Naive thymus-derived CD4-positive, alpha-beta T cell (primary cell): ENCODE measurements at regions of chr3 and their contacts with region 1.

Region 1: GRCh38 chr3:16319307-16319706 is 54.3 kb downstream of the OXNAD1 start:
- DNase-seq: peak in 8 of 9 donors; percentile 66 to 81 (median 78)
- ATAC-seq: peak; percentile 93
- H3K4me3 ChIP-seq: no peak overlapping the region
- H3K4me3 Mint-ChIP-seq: peak overlapping the region; percentile 35 to 78 (median 60)
- H3K27ac ChIP-seq: peak overlapping the region; percentile 60
- H3K27ac Mint-ChIP-seq: peak overlapping the region; percentile 79 to 98 (median 91)
- H3K4me1 ChIP-seq: peaks cover 40 to 58% of the 10 kb centered on the region in 2 donors
- H3K4me1 Mint-ChIP-seq: peaks cover 44 to 89% (median 81%) of the 10 kb centered on the region in 7 donors
- H3K27me3 ChIP-seq: no peaks in the 10 kb centered on the region
- H3K27me3 Mint-ChIP-seq: no peaks in the 10 kb centered on the region

Region 2: DNA sequence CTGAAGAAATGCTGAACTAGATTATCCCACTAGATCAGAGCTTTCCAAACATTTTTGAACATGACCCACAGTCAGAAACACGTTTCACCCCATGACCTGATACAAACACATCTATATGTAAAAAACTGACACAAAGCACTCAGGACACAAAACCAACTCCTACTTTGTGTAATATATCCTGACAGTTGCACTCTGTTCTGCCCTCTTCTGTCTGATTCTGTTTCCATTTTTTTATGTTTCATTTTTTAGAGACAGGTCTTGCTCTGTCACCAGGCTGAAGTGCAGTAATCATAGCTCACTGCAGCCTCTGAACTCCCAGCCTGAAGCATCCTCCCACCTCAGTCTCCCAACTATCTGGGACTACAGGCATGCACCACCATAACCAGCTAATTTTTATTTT is 210.0 kb after region 1 on chr3:
- CTCF ChIA-PET with region 1: interaction called, 10 read pairs
- POLR2A ChIA-PET with region 1: no interaction called
- intact Hi-C with region 1: no loop called
- DNase-seq: peak in 5 of 9 donors; percentile 32 to 54 (median 39)
- ATAC-seq: peak; percentile 62
- H3K4me3 ChIP-seq: no peak overlapping the region
- H3K4me3 Mint-ChIP-seq: no peak overlapping the region
- H3K27ac ChIP-seq: no peak overlapping the region
- H3K27ac Mint-ChIP-seq: peak overlapping the region in 6 of 9 donors; percentile 26 to 72 (median 58)
- H3K4me1 ChIP-seq: no peaks in the 10 kb centered on the region
- H3K4me1 Mint-ChIP-seq: peaks cover 4 to 19% (median 12%) of the 10 kb centered on the region in 7 donors
- H3K27me3 ChIP-seq: no peaks in the 10 kb centered on the region
- H3K27me3 Mint-ChIP-seq: peaks cover 0 to 19% (median 0%) of the 10 kb centered on the region in 5 donors

Region 3: GRCh38 chr3:16543242-16543864 is 224.0 kb after region 1 on chr3:
- CTCF ChIA-PET with region 1: no interaction called
- POLR2A ChIA-PET with region 1: no interaction called
- intact Hi-C with region 1: no loop called
- DNase-seq: no peak
- ATAC-seq: no peak
- H3K4me3 ChIP-seq: no peak overlapping the region
- H3K4me3 Mint-ChIP-seq: no peak overlapping the region
- H3K27ac ChIP-seq: no peak overlapping the region
- H3K27ac Mint-ChIP-seq: no peak overlapping the region
- H3K4me1 ChIP-seq: no peaks in the 10 kb centered on the region
- H3K4me1 Mint-ChIP-seq: peaks cover 0 to 27% (median 0%) of the 10 kb centered on the region in 7 donors
- H3K27me3 ChIP-seq: peaks cover 0 to 1% of the 10 kb centered on the region in 2 donors
- H3K27me3 Mint-ChIP-seq: peaks cover 0 to 23% (median 4%) of the 10 kb centered on the region in 5 donors

Region 4: DNA sequence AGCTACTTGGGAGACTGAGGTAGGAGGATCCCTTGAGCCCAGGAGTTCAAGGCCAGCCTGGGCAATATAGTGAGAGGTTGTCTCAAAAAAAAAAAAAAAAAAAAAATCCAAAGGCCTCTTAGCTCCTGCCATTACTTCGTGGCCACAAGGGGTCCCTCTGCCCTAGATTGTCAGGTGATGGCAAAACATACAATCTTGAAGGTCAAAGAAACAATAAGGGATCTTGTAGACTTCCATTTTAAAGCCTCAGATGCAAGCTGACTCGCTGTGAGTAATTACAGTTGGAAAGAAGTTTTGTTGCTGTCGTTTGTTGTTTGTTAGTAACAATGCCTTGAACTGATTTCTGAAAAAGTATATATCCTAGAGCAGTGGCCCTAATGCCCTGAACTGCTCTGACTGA is 509.5 kb after region 1 on chr3:
- CTCF ChIA-PET with region 1: no interaction called
- POLR2A ChIA-PET with region 1: no interaction called
- intact Hi-C with region 1: no loop called
- DNase-seq: peak in 6 of 9 donors; percentile 29 to 59 (median 42)
- ATAC-seq: peak; percentile 80
- H3K4me3 ChIP-seq: no peak overlapping the region
- H3K4me3 Mint-ChIP-seq: no peak overlapping the region
- H3K27ac ChIP-seq: no peak overlapping the region
- H3K27ac Mint-ChIP-seq: peak overlapping the region in 3 of 9 donors; percentile 23 to 53 (median 42)
- H3K4me1 ChIP-seq: peaks cover 11 to 15% of the 10 kb centered on the region in 2 donors
- H3K4me1 Mint-ChIP-seq: peaks cover 16 to 37% (median 19%) of the 10 kb centered on the region in 7 donors
- H3K27me3 ChIP-seq: no peaks in the 10 kb centered on the region
- H3K27me3 Mint-ChIP-seq: peaks cover 0 to 20% (median 0%) of the 10 kb centered on the region in 5 donors